ENCODE measurements at regions of chr14 and their contacts with region 1.

Region 1: GRCh38 chr14:37985826-37986470 is 221.8 kb upstream of the SSTR1 start:
- DNase-seq: peak; percentile 65
- ATAC-seq: peak; percentile 62; the same call in 1 of the 2 replicates
- H3K4me3 ChIP-seq: no peak overlapping the region
- H3K27ac ChIP-seq: no peak overlapping the region
- H3K4me1 ChIP-seq: no peaks in the 10 kb centered on the region
- H3K27me3 ChIP-seq: no peaks in the 10 kb centered on the region
- CTCF ChIP-seq: peak; percentile 77
- POLR2A ChIP-seq: no peak
- RAD21 ChIP-seq: peak; percentile 70

Region 2: DNA sequence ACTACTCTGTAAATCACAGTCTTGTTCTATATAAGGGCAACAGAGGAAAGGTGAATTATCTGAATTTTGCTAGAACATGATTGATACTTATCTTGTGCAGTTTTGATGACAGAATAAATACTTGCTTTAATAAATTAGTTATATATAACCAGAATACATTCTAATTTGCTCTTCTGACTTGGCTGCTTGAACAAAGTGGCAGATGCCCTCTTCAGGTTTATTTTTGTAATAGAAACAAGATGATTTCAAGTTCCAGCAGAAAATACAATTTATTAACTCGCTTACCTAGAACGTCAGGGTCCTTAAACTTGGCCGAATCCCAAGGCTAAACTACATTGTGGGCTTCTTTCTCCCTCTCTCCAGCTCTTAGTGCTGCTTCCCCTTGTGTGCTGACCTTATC is 164.1 kb after region 1 on chr14:
- CTCF ChIA-PET with region 1: no interaction called
- POLR2A ChIA-PET with region 1: no interaction called
- dilution Hi-C with region 1: no loop called
- in situ Hi-C with region 1: no loop called
- intact Hi-C with region 1: no loop called
- DNase-seq: peak; percentile 2
- ATAC-seq: no peak
- H3K4me3 ChIP-seq: no peak overlapping the region
- H3K27ac ChIP-seq: no peak overlapping the region
- H3K4me1 ChIP-seq: no peaks in the 10 kb centered on the region
- H3K27me3 ChIP-seq: no peaks in the 10 kb centered on the region
- CTCF ChIP-seq: 0 out of 2 replicates have a peak, but pooled peaks have one; percentile 30
- POLR2A ChIP-seq: no peak
- RAD21 ChIP-seq: 0 out of 2 replicates have a peak, but pooled peaks have one; percentile 19

Region 3: GRCh38 chr14:38605193-38606114 is 619.5 kb after region 1 on chr14:
- CTCF ChIA-PET with region 1: no interaction called
- POLR2A ChIA-PET with region 1: no interaction called
- dilution Hi-C with region 1: no loop called
- in situ Hi-C with region 1: no loop called
- intact Hi-C with region 1: loop called (anchors 2 kb)
- DNase-seq: no peak
- ATAC-seq: no peak
- H3K4me3 ChIP-seq: no peak overlapping the region
- H3K27ac ChIP-seq: no peak overlapping the region
- H3K4me1 ChIP-seq: no peaks in the 10 kb centered on the region
- H3K27me3 ChIP-seq: no peaks in the 10 kb centered on the region
- CTCF ChIP-seq: 0 out of 2 replicates have a peak, but pooled peaks have one; percentile 7
- POLR2A ChIP-seq: no peak
- RAD21 ChIP-seq: no peak

Measured in IMR-90 (cell line).